AG04450 (cell line): ENCODE measurements at regions of chr1 and their contacts with region 1.

Region 1: DNA sequence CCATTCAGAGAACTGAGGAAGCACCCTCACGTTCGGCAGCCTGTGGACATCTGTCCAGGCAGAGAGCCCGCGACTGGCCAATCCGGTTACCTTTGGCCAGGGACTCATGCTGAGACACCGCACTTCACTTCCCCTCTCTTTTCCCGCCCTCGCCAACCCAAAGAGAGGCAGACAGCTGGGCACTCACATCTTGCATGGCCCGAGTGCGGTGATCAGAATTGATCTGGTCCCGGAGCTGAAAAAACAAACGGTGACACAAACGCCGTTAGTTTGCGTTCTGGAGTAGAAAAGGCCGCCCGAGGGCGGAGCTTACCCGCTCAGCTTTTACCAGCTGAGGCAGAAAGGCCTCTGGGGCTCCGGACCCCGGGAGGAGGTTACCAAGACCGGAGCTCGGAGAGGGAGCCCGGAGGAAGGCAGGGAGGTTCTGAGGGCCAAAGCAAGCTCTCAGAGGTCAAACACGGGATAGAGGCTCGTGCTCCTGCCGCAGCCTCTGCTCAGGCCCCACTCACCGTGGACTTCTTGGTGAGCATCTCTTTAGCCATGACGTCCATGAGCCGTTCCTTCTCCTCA is 376 bp downstream of the SF3A3 start:
- DNase-seq: no peak
- H3K4me3 ChIP-seq: peak overlapping the region; percentile 98
- H3K27ac ChIP-seq: peak overlapping the region; percentile 70
- H3K27me3 ChIP-seq: no peaks in the 10 kb centered on the region
- CTCF ChIP-seq: no peak

Region 2: GRCh38 chr1:37890378-37891014 is 99.0 kb before region 1 on chr1:
- CTCF ChIA-PET with region 1: interaction called, 10 read pairs
- POLR2A ChIA-PET with region 1: no interaction called
- DNase-seq: no peak
- H3K4me3 ChIP-seq: no peak overlapping the region
- H3K27ac ChIP-seq: no peak overlapping the region
- H3K27me3 ChIP-seq: no peaks in the 10 kb centered on the region
- CTCF ChIP-seq: peak; percentile 46

Region 3: DNA sequence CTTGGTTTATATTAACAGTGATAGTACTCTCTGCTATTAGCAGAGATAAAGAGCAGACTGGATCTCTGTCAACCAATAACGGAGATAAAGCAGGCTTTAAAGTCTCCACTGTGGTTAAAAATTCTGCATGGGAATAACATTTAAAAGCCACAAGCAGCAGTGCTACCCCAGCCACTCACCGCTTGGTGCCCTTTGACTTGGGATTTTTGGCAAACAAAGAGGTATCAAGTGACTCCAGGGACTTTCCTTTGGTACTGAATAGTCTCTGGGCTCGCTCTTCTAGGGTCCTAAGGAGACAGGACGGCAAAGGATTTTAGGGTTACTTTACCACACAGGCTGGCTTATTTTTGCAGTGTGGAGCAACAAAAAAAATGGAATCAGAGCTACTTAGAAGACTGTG is 10.9 kb before region 1 on chr1:
- CTCF ChIA-PET with region 1: interaction called, 10 read pairs
- POLR2A ChIA-PET with region 1: no interaction called
- DNase-seq: no peak
- H3K4me3 ChIP-seq: no peak overlapping the region
- H3K27ac ChIP-seq: no peak overlapping the region
- H3K27me3 ChIP-seq: no peaks in the 10 kb centered on the region
- CTCF ChIP-seq: no peak

Region 4: DNA sequence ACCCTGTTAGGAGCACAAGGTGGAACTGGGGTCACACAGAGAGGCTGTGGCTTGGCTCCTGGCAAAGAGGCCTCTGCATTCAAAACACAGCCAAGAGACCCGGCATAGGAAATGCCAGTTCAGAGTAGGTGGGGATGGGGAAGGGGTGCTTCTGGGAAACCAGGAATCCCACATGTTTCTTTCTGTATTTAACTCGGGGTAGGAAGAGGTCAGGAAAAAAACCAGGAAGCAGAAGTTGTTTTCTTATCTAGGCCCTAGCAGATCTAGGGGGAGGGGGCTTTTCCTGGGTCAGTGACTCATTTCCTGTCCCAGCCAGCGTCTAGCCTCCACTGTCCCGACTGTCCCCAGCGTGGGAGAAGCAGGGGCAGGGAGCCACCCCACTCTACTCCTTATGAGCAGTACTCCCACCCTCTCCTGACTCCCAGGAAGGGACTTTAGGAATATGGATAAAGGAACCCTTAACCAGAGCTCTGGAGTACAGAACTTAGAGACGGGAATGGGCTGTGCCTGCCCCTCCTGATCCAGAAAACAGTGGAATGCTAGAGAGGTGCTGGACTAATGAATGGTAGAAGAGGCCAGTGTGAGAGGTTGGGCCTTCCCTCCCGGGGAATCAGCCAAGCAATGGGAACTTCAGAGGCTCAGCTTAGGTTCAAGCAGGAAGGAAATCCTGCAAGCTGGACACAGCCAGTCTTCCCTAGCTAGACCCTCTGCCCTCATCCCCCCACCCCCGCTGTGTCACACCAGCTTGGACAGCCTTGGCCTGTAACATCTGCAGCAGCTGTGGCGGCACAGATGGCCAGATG is 10.2 kb after region 1 on chr1:
- CTCF ChIA-PET with region 1: interaction called, 44 read pairs
- POLR2A ChIA-PET with region 1: interaction called, 7 read pairs
- DNase-seq: no peak
- H3K4me3 ChIP-seq: peak overlapping the region; percentile 47
- H3K27ac ChIP-seq: peak overlapping the region; percentile 99
- H3K27me3 ChIP-seq: no peaks in the 10 kb centered on the region
- CTCF ChIP-seq: no peak

Region 5: DNA sequence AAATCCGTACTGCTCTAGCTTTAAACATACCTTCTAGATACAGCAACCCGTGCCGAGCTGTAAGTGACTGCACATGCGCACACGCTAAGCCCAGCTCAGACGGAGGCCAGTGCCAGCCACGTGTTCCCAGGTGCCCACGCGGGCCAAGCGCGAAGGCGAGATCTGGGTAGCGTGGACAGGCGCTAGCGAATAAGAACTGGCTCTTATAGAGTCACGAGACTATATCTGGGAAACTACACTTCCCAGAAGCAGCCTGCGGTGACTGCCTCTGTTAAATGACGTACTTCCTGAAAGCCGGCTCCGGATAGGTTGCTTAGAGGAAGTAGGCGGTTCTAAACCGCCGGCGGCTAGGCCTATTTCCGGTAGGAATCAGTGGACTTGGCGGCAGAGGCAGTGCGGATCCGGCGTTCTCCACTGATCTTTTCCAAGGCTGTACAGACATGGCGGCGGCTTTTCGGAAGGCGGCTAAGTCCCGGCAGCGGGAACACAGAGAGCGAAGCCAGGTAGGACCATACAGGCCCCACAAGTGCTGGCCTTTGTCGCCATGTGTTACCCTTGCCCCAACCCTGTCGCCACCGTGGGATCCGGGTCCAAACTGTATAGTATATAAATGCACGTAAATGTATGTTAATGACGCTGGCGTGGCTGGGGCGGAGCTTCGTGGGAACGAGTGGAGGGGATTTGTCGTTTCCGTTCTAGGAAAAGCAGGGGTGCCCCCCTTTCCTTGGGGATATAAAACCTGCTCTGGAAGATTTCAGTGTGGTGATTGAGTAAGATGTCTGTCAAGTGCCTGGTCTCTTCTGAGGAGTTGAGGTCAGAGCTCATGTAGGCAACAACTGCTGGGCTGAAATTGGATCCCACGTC is 23.1 kb after region 1 on chr1 and contains the start of gene UTP11:
- CTCF ChIA-PET with region 1: interaction called, 179 read pairs
- POLR2A ChIA-PET with region 1: interaction called, 4 read pairs
- DNase-seq: peak; percentile 97
- H3K4me3 ChIP-seq: peak within 1 kb of the TSS; percentile 92
- H3K27ac ChIP-seq: peak within 1 kb of the TSS; percentile 99
- H3K27me3 ChIP-seq: no peaks in the 10 kb centered on the region
- CTCF ChIP-seq: no peak
- polyA plus RNA-seq, gene UTP11: 32.9 and 43.8 TPM in 2 replicates